ENCODE measurements at regions of chr7 and their contacts with region 1.

Region 1: DNA sequence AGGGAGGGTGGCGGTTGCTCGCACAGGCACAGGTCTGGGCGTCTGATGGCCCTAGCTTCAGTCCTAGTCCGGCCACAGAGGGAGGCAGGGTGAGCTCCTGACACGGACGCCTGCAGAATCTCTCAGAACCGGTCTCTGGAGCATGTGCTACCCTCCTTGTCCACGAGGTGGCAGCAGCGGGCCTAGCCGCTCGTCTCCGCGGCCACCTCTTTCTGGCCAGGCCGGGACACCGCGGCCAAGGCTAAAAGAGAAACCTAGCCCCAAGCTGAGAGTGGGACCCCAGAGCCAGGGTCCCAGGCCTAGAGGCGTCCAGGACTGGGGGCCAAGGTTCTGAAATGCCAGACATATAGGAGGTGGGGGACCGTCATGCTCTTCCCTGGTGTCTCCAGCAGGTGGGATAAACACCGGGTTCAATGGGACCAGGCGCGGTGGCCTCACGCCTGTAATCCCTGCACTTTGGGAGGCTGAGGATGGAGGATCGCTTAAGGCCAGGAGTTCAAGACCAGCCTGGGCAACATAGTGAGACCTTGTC is 3.2 kb upstream of the LAT2 start:
- DNase-seq: peak; percentile 84 to 98
- H3K4me3 ChIP-seq: no peak overlapping the region
- CTCF ChIP-seq: peak in 1 of 3 donors; percentile 96
- POLR2A ChIP-seq: no peak

Region 2: GRCh38 chr7:74068393-74069085 is 138.1 kb before region 1 on chr7:
- intact Hi-C with region 1: loop called (anchors 5 kb)
- DNase-seq: no peak
- H3K4me3 ChIP-seq: no peak overlapping the region
- CTCF ChIP-seq: no peak
- POLR2A ChIP-seq: no peak

Region 3: DNA sequence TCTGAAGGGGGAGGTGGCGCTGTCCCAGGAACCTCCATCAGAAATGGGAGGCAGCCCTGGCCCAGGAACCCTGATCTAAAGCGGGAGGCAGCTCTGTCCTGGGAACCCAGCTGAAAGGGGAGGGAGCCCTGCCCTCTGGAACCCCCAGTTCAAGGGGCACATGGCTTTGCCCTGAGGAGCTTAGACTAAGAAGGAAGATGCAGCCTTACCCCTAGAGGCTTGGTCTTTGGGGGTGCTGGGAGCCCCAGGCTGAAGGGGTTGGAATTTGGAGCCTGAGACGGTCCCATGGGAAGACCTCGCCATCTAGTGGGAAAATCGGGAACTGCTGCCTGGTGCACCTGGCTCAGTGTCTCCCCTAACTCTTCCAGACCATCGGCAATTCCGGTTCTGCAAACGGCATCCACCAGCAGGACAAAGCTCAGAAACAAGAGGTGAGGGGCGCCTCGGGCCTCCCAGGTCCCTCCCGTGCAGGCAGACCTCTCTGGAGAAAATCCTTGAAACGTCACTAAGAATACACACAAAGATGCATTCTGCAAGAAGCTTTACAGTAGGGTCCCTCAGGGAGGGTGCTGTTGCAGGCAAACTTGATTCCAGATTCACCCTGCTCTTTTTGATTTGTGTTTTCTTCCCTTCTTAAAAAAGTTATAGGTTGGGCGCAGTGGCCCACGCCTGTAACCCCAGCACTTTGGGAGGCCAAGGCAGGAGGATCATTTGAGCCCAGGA is 194.6 kb after region 1 on chr7:
- intact Hi-C with region 1: loop called (anchors 5 kb)
- DNase-seq: peak; percentile 59 to 93
- H3K4me3 ChIP-seq: no peak overlapping the region
- CTCF ChIP-seq: peak in 2 of 3 donors; percentile 16 to 94
- POLR2A ChIP-seq: no peak